Activated naive CD4-positive, alpha-beta T cell treated with anti-CD3 and anti-CD28 coated beads for 36 hours (primary cell): ENCODE measurements at regions of chr1 and their contacts with region 1.

Region 1: DNA sequence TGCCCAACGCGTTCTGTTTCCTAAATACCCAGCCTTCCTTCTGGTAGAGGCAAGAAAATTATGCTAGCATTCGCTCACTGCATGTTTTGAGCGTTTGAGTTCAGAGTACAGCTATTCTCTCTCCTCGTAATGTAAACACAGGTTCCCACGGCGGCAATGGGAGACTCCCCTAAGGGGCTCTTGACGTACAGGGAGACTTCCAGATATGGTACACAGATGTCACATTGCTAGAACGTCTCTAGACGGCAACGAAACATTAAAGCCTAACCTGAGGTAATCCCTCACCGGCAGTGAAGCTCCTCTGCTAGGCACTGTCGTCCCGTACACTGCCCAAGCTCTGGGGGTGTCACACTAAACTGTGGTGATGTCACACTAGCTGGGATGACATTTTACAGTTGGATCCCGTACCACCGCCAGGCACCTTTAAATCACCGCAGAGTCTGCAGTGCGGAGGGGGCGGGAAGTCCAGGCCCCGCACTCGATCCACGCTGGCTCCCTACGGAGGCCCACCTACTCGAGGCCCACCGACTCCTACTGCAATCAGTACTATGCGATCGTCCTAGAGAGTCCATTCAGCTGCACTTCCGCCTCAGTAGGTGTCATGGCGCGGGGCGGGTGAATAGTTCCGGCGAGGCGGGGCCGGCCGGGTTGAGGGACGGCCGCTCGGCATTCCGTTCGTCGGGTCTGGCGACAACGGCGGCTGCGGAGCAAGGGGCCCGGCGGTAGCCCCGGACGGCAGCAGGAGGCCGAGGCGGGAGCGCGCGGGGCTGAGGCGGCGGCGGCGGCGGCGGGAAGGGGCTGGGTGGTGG is at the start of gene HIPK1:
- DNase-seq: peak; percentile 94
- H3K4me3 Mint-ChIP-seq: peak within 1 kb of the TSS; percentile 96
- H3K27ac Mint-ChIP-seq: peak within 1 kb of the TSS; percentile 99
- H3K4me1 Mint-ChIP-seq: peaks cover 40% of the 10 kb centered on the region
- H3K27me3 Mint-ChIP-seq: no peaks in the 10 kb centered on the region
- total RNA-seq, gene HIPK1: 47.7 to 51.0 TPM

Region 2: DNA sequence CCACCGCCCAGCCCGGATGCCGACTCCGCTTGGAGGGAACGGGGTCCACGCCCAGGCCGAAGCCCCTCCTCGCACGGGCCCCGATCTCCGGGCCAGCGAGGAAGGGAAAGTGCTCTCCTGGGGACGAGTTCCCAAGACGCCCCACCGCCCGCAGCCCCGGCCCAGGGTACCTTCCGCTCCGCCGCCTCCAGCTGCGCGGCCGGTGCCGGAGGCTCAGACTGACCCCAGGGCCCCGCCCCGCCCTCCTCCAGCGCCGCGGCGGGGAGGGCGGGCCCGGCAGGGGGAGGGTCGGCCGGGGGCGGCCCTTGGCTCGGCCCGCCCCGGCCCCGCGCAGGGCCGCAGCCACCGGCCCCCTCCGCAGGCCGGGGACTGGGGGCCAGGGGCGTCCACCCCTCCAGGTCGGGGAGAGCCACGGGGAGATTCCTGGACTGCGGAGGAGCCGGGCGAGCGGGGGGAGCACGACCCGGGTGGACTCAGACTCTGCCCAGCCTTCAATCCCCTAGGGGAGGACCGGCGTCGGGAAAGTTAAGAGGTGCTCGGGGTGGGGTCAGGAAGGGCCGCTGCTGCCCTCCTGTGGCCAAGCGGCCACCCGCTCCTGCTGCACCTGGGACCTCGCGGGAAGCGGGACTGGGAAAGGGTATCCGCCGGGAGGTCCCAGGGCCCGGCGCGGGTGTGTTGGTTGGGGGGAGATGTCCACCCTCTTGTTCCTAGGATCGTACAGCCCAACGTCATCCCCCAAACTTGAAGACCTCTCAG is 1222.1 kb before region 1 on chr1 and contains the start of gene RHOC:
- CTCF ChIA-PET with region 1: no interaction called
- intact Hi-C with region 1: loop called (anchors 10 kb)
- DNase-seq: peak; percentile 80
- H3K4me3 Mint-ChIP-seq: peak within 1 kb of the TSS; percentile 69
- H3K27ac Mint-ChIP-seq: no peak within 1 kb of the TSS
- H3K4me1 Mint-ChIP-seq: peaks cover 36% of the 10 kb centered on the region
- H3K27me3 Mint-ChIP-seq: peaks cover 2% of the 10 kb centered on the region
- total RNA-seq, gene RHOC: 36.3 to 37.3 TPM

Region 3: DNA sequence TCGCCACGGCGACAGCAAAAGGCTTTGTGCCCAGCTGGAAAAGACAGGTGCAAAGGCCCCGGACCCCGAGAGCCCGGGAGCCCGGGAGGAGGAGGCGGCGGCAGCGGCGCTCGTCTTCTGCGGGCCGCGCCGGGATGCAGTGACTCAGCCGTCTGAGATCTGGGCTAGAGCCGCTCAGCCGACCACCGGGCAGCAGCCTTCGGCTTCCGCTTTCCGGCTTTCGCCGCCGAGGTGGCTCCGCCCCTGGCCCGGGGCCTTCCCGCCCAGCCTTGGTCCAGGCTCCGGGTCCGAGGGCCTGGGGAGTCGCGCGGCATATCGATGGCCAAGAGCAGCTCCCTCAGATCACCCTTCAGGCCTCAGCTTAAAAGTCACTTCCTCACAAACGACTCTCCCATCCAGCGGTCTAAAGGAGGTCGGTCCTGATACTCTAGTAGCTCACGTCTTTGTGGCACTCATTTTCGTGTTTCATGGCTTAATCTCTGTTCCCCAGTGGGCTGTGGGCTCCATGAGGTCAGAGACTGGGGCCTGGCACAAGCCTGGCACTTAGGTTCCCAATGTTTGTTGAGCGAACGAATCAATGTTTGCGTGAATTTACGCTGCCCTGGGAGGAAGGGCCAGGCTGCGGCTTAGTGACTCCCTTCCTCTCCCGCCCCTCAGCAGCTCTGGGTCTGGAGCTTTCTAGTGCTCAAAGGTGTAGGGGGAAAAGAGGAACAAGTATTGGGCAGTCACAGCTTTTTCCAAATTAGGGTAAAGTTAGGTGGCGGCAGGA is 169.6 kb before region 1 on chr1 and contains the start of gene PHTF1:
- CTCF ChIA-PET with region 1: no interaction called
- intact Hi-C with region 1: loop called (anchors 1 kb)
- DNase-seq: peak; percentile 63
- H3K4me3 Mint-ChIP-seq: peak within 1 kb of the TSS; percentile 92
- H3K27ac Mint-ChIP-seq: peak within 1 kb of the TSS; percentile 96
- H3K4me1 Mint-ChIP-seq: peaks cover 14% of the 10 kb centered on the region
- H3K27me3 Mint-ChIP-seq: no peaks in the 10 kb centered on the region
- total RNA-seq, gene PHTF1: 5.4 to 6.3 TPM

Region 4: DNA sequence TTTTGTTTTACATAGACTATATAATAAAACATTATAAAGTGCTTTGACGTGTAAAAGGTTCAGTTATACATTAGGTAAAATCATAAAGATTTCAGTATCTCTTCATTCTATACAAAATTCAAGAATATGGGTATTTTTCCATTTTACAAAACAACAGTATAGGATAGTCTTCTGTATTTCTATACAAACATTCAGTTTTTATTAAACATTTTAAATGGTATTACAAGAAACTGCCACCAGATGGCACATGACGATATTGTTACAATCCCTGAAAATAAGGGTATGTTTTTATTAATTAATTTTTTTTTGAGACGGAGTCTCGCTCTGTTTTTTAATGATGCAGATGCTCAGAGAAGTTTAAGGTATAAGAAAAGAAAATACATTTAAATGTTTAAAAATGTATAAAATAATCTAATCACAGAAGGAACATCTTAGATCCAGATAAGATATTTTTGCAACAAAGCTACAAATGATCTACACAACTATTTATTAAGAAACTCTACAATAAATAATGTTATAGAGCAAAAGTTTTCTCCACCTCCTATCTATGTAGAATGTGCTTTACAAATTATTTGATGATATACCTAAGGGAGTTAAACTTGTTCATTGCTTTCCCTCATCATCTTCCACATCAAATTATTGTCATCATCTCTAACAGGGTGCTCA is 93.4 kb before region 1 on chr1:
- CTCF ChIA-PET with region 1: interaction called, 16 read pairs
- intact Hi-C with region 1: loop called (anchors 1 kb)
- DNase-seq: peak; percentile 35
- H3K4me3 Mint-ChIP-seq: no peak overlapping the region
- H3K27ac Mint-ChIP-seq: no peak overlapping the region
- H3K4me1 Mint-ChIP-seq: peaks cover 3% of the 10 kb centered on the region
- H3K27me3 Mint-ChIP-seq: no peaks in the 10 kb centered on the region

Region 5: GRCh38 chr1:113940365-113941244 is 11.5 kb after region 1 on chr1:
- CTCF ChIA-PET with region 1: interaction called, 53 read pairs
- intact Hi-C with region 1: loop called (anchors 1 kb)
- DNase-seq: peak; percentile 70
- H3K4me3 Mint-ChIP-seq: peak overlapping the region; percentile 69
- H3K27ac Mint-ChIP-seq: peak overlapping the region; percentile 73
- H3K4me1 Mint-ChIP-seq: peaks cover 67% of the 10 kb centered on the region
- H3K27me3 Mint-ChIP-seq: no peaks in the 10 kb centered on the region

Region 6: DNA sequence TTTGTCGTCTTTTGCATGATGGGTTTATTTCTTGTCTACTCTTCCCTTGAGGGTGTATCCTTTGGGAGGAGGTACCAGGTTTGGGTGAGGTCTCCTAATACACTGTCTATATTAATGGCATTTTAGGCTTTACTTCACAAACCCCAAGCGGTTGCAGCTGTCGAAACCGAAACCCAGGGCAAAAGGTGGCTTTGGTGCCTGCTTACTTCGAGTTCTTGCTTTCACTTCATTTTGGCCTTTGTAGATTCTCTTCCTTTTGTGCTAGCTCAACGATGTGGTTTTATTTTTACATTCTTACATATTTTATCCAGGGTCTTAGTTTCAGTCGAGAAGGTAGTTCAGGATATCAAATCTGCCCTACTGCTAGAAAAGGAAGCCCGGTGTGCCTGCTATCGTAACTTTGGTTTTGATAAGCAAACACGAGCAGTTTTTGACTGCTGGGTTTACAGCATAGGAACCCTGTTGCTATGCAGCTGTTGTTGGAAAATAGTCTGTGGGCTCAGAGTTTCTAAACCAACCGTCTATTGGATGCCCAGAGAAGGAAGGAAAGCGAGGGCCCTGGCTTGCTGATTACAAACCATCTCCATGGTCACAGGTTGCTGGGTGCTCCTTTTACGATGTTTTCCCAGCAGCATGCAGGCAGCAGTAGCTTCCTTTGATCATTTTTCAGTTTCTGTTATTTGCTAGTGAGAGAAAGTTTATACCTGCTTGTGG is 1170.0 kb after region 1 on chr1:
- CTCF ChIA-PET with region 1: no interaction called
- intact Hi-C with region 1: loop called (anchors 10 kb)
- DNase-seq: peak; percentile 76
- H3K4me3 Mint-ChIP-seq: peak overlapping the region; percentile 78
- H3K27ac Mint-ChIP-seq: peak overlapping the region; percentile 57
- H3K4me1 Mint-ChIP-seq: peaks cover 30% of the 10 kb centered on the region
- H3K27me3 Mint-ChIP-seq: no peaks in the 10 kb centered on the region